CD8-positive, alpha-beta T cell (primary cell): ENCODE measurements at regions of chr7 and their contacts with region 1.

Region 1: GRCh38 chr7:143240291-143241168 is 18.7 kb downstream of the TAS2R40 start:
- DNase-seq: peak; percentile 48 to 86 (median 72)
- ATAC-seq: peak; percentile 99
- H3K4me3 ChIP-seq: no peak overlapping the region
- H3K4me3 Mint-ChIP-seq: no peak overlapping the region
- H3K27ac ChIP-seq: no peak overlapping the region
- H3K27ac Mint-ChIP-seq: no peak overlapping the region
- H3K4me1 ChIP-seq: peaks cover 18% of the 10 kb centered on the region
- H3K4me1 Mint-ChIP-seq: peaks cover 24% of the 10 kb centered on the region
- H3K27me3 ChIP-seq: no peaks in the 10 kb centered on the region
- H3K27me3 Mint-ChIP-seq: peaks cover 4% of the 10 kb centered on the region
- CTCF ChIP-seq: peak; percentile 97

Region 2: GRCh38 chr7:142908921-142909890 is 331.3 kb before region 1 on chr7:
- CTCF ChIA-PET with region 1: no interaction called
- POLR2A ChIA-PET with region 1: no interaction called
- intact Hi-C with region 1: no loop called
- DNase-seq: peak in 1 of 9 experiments; percentile 14
- ATAC-seq: no peak
- H3K4me3 ChIP-seq: no peak overlapping the region
- H3K4me3 Mint-ChIP-seq: no peak overlapping the region
- H3K27ac ChIP-seq: no peak overlapping the region
- H3K27ac Mint-ChIP-seq: no peak overlapping the region
- H3K4me1 ChIP-seq: no peaks in the 10 kb centered on the region
- H3K4me1 Mint-ChIP-seq: no peaks in the 10 kb centered on the region
- H3K27me3 ChIP-seq: no peaks in the 10 kb centered on the region
- H3K27me3 Mint-ChIP-seq: peaks cover 28% of the 10 kb centered on the region
- CTCF ChIP-seq: no peak

Region 3: DNA sequence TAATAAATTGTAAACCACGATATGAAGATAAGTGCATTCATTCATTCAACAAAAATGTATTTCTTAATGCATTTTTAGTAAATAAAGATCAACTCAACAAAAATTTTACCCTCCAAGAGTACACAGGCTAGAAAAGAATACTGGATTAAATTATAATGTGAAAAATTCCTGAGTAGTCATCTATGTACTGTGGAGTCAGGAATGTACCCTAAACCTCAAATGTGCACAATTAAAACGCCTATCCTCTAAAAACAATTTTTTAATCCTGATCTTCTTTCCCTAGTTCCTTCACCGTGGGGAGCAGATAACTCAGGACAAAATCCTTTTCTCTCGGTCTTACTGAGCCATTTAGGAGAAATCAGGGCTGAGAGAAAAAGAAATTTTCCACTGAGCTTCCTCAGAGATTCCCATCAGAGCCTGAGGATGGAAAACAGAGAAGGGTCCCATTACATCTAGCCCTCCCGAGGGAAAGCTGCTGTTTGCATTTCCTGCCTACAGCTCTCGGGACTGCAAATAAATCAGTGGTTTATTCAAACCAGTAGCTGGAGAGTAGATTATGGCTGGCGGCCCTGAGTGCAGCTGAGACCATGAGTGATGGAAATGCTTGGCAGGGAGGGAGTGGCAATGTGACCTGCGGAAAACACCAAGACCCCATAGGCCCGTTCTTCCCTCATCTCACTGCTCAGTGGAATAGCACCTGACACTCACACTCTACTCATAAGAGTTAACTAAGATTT is 11.3 kb before region 1 on chr7:
- CTCF ChIA-PET with region 1: interaction called, 13 read pairs
- POLR2A ChIA-PET with region 1: no interaction called
- intact Hi-C with region 1: no loop called
- DNase-seq: no peak
- ATAC-seq: no peak
- H3K4me3 ChIP-seq: no peak overlapping the region
- H3K4me3 Mint-ChIP-seq: no peak overlapping the region
- H3K27ac ChIP-seq: no peak overlapping the region
- H3K27ac Mint-ChIP-seq: no peak overlapping the region
- H3K4me1 ChIP-seq: no peaks in the 10 kb centered on the region
- H3K4me1 Mint-ChIP-seq: no peaks in the 10 kb centered on the region
- H3K27me3 ChIP-seq: peaks cover 0 to 9% of the 10 kb centered on the region in 2 experiments
- H3K27me3 Mint-ChIP-seq: peaks cover 1% of the 10 kb centered on the region
- CTCF ChIP-seq: no peak

Region 4: DNA sequence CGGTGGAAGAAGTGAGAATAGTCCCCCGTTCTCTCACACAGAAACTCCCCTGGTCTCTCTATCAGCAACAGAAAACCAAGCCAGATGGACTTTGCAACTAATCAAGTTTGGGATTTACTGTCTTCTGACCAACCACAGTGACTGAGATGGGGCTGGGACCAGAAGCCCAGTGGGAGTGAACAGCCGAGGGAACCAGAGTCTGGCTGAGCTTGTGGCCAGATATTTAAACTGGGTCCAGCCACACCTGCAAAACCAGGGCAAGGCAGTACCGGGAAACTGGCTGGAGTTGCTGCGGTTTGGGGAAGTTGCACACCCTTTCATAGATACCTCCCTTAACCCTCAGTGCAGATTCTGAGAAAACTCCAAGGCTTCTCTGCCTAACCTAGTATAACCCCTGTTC is 28.7 kb after region 1 on chr7:
- CTCF ChIA-PET with region 1: interaction called, 43 read pairs
- POLR2A ChIA-PET with region 1: interaction called, 5 read pairs
- intact Hi-C with region 1: no loop called
- DNase-seq: no peak
- ATAC-seq: no peak
- H3K4me3 ChIP-seq: no peak overlapping the region
- H3K4me3 Mint-ChIP-seq: no peak overlapping the region
- H3K27ac ChIP-seq: no peak overlapping the region
- H3K27ac Mint-ChIP-seq: peak overlapping the region; percentile 23
- H3K4me1 ChIP-seq: peaks cover 18% of the 10 kb centered on the region
- H3K4me1 Mint-ChIP-seq: peaks cover 32% of the 10 kb centered on the region
- H3K27me3 ChIP-seq: no peaks in the 10 kb centered on the region
- H3K27me3 Mint-ChIP-seq: no peaks in the 10 kb centered on the region
- CTCF ChIP-seq: no peak

Region 5: DNA sequence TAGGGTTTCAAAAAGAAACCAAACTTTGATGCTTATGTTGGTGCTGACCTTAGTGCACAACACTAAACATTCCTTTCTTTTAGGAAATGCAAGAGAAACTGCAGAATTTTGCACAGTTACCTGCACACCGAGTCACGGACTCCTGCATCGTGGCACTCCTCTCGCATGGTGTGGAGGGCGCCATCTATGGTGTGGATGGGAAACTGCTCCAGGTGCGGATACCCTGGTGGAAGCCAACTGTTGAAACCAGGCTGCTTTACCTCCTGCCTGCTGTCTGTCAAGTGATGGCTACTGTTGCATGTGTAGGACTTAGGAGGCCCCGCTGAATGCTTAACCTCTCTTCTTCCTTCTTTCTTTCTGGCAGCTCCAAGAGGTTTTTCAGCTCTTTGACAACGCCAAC is 59.3 kb after region 1 on chr7:
- CTCF ChIA-PET with region 1: interaction called, 180 read pairs
- POLR2A ChIA-PET with region 1: interaction called, 6 read pairs
- intact Hi-C with region 1: loop called (anchors 1 kb)
- DNase-seq: peak; percentile 42 to 76 (median 69)
- ATAC-seq: peak; percentile 100
- H3K4me3 ChIP-seq: no peak overlapping the region
- H3K4me3 Mint-ChIP-seq: no peak overlapping the region
- H3K27ac ChIP-seq: no peak overlapping the region
- H3K27ac Mint-ChIP-seq: no peak overlapping the region
- H3K4me1 ChIP-seq: peaks cover 9% of the 10 kb centered on the region
- H3K4me1 Mint-ChIP-seq: peaks cover 31% of the 10 kb centered on the region
- H3K27me3 ChIP-seq: no peaks in the 10 kb centered on the region
- H3K27me3 Mint-ChIP-seq: no peaks in the 10 kb centered on the region
- CTCF ChIP-seq: peak; percentile 80

Region 6: DNA sequence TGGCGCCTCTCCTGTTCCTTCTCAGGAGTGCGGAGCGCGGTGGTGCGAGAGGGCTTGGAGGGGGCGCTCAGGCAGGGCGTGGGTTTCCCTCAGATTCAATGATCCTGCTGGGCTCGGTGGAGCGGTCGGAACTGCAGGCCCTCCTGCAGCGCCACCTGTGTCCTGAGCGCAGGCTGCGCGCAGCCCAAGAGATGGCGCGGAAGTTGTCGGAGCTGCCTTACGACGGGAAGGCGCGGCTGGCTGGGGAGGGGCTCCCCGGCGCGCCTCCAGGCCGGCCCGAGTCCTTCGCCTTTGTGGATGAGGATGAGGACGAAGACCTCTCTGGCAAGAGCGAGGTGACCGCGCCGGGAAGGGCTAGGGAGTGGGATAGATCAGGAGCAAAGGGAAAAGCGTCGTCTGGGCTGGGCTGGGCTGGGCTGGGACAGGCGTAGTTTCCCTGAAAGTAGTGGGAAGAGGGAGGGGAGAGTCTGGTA is 104.9 kb after region 1 on chr7:
- CTCF ChIA-PET with region 1: interaction called, 13 read pairs
- POLR2A ChIA-PET with region 1: no interaction called
- intact Hi-C with region 1: loop called (anchors 1 kb)
- DNase-seq: peak; percentile 33 to 83 (median 65)
- ATAC-seq: peak; percentile 99
- H3K4me3 ChIP-seq: peak overlapping the region; percentile 32 to 35
- H3K4me3 Mint-ChIP-seq: peak overlapping the region; percentile 69
- H3K27ac ChIP-seq: no peak overlapping the region
- H3K27ac Mint-ChIP-seq: no peak overlapping the region
- H3K4me1 ChIP-seq: peaks cover 5% of the 10 kb centered on the region
- H3K4me1 Mint-ChIP-seq: peaks cover 9% of the 10 kb centered on the region
- H3K27me3 ChIP-seq: no peaks in the 10 kb centered on the region
- H3K27me3 Mint-ChIP-seq: peaks cover 7% of the 10 kb centered on the region
- CTCF ChIP-seq: peak; percentile 64

Region 7: DNA sequence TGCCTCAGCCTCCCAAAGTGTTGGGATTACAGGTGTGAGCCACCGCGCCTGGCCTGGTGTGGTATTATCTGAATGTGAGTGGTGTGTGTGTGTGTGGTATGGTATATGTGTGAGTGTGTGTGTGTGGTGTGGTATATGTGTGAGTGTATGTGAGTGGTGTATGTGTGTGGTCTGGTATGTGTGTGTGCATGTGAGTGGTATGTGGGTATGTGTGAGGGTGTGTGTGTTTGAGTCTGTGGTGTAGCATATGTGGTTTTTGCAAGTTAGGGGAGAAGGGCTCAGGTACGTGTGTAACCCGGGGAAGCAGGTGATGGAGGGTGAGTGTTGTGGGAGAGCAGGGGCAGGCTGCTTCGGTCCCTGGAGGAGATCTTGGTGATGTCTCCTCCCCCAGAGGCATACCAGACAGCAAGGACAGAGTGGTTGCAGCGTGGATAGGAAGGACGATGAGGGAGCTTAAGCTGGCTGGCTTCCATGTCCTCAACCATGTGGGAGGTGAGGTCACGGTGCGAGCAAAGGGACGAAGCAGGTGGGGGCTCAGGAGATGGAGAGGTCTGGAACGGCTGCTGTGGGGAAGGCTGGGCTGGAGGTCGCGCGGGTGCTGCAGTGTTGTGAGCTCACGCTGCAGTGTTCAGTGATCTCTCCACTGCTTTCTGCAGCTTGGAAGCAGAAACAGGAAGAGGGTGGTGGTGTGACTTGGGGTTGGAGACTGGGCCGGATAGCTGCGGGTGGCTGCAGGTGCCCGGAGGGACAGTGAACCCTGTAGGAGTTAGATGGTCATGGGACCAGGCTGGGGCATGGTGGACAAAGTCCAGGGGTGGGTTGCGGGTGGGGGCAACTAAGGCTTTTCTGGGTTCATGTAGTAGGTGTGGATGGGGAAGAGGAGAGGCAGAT is 145.6 kb after region 1 on chr7:
- CTCF ChIA-PET with region 1: interaction called, 12 read pairs
- POLR2A ChIA-PET with region 1: interaction called, 4 read pairs
- intact Hi-C with region 1: no loop called
- DNase-seq: peak in 8 of 9 experiments; percentile 33 to 83 (median 56)
- ATAC-seq: peak; percentile 52
- H3K4me3 ChIP-seq: peak overlapping the region; percentile 10 to 21
- H3K4me3 Mint-ChIP-seq: no peak overlapping the region
- H3K27ac ChIP-seq: peak overlapping the region; percentile 50 to 52
- H3K27ac Mint-ChIP-seq: no peak overlapping the region
- H3K4me1 ChIP-seq: peaks cover 60% of the 10 kb centered on the region
- H3K4me1 Mint-ChIP-seq: peaks cover 16% of the 10 kb centered on the region
- H3K27me3 ChIP-seq: no peaks in the 10 kb centered on the region
- H3K27me3 Mint-ChIP-seq: no peaks in the 10 kb centered on the region
- CTCF ChIP-seq: no peak

Region 8: GRCh38 chr7:143422033-143422432 is 181.5 kb after region 1 on chr7:
- CTCF ChIA-PET with region 1: interaction called, 96 read pairs
- POLR2A ChIA-PET with region 1: interaction called, 15 read pairs
- intact Hi-C with region 1: no loop called
- DNase-seq: no peak
- ATAC-seq: no peak
- H3K4me3 ChIP-seq: no peak overlapping the region
- H3K4me3 Mint-ChIP-seq: no peak overlapping the region
- H3K27ac ChIP-seq: no peak overlapping the region
- H3K27ac Mint-ChIP-seq: no peak overlapping the region
- H3K4me1 ChIP-seq: no peaks in the 10 kb centered on the region
- H3K4me1 Mint-ChIP-seq: peaks cover 18% of the 10 kb centered on the region
- H3K27me3 ChIP-seq: no peaks in the 10 kb centered on the region
- H3K27me3 Mint-ChIP-seq: peaks cover 2% of the 10 kb centered on the region
- CTCF ChIP-seq: no peak